Activated CD8-positive, alpha-beta T cell treated with anti-CD3 and anti-CD28 coated beads for 36 hours (primary cell): ENCODE measurements at regions of chr10 and their contacts with region 1.

Region 1: DNA sequence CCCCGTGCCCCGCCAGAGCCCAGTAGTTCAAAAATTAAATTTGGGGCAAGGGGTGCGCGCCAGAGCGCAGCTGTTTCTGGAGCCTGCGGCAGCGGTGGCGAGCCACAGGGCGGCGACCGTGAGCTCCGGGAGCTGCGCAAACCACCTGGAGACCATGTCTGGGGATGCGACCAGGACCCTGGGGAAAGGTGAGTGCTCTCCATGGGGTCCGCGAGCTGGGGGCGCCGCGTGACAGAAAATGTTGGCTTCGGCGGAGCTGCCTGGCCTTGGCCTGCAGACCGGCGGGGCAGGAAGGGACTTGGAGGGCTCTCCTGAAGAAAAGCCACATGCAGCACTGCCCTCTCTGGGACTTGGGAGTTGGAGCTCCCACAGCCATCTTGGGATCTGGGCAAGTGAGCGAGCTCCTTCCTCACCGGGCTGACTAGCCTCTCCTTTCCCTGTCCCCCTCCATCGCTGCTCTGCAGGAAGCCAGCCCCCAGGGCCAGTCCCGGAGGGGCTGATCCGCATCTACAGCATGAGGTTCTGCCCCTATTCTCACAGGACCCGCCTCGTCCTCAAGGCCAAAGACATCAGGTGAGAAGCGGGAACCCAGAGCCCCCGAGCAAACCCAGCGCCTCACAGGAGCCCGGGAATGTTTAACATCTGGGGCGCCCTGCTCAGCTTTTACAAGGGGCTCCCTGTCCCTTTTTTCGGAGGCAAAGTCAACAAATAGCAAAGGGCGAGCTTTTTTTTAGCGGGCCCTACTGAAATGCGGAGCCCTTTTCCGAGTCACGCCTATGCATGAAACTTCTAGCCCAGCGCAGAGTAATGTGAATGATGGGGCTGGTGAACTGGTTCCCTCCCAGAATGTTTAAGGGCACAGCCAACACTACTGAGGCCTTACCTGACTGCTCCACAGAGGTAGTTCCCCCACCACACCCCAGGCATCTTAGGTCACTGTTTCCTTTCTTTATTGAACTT is 6.1 kb downstream of the GSTO2 start:
- DNase-seq: peak; percentile 59
- ATAC-seq: peak; percentile 93
- H3K4me3 Mint-ChIP-seq: peak overlapping the region; percentile 62
- H3K27ac Mint-ChIP-seq: no peak overlapping the region
- H3K4me1 Mint-ChIP-seq: peaks cover 8% of the 10 kb centered on the region
- H3K27me3 Mint-ChIP-seq: peaks cover 19% of the 10 kb centered on the region
- CTCF ChIP-seq: peak; percentile 90

Region 2: GRCh38 chr10:103739039-103739764 is 535.8 kb before region 1 on chr10:
- CTCF ChIA-PET with region 1: no interaction called
- POLR2A ChIA-PET with region 1: no interaction called
- intact Hi-C with region 1: no loop called
- DNase-seq: no peak
- ATAC-seq: no peak
- H3K4me3 Mint-ChIP-seq: no peak overlapping the region
- H3K27ac Mint-ChIP-seq: no peak overlapping the region
- H3K4me1 Mint-ChIP-seq: no peaks in the 10 kb centered on the region
- H3K27me3 Mint-ChIP-seq: no peaks in the 10 kb centered on the region
- CTCF ChIP-seq: no peak

Region 3: GRCh38 chr10:104028146-104028545 is 246.9 kb before region 1 on chr10:
- CTCF ChIA-PET with region 1: no interaction called
- POLR2A ChIA-PET with region 1: no interaction called
- intact Hi-C with region 1: no loop called
- DNase-seq: peak; percentile 11
- ATAC-seq: peak; percentile 77
- H3K4me3 Mint-ChIP-seq: no peak overlapping the region
- H3K27ac Mint-ChIP-seq: no peak overlapping the region
- H3K4me1 Mint-ChIP-seq: peaks cover 10% of the 10 kb centered on the region
- H3K27me3 Mint-ChIP-seq: no peaks in the 10 kb centered on the region
- CTCF ChIP-seq: no peak

Region 4: GRCh38 chr10:104246976-104247375 is 28.1 kb before region 1 on chr10:
- CTCF ChIA-PET with region 1: interaction called, 14 read pairs
- POLR2A ChIA-PET with region 1: interaction called, 74 read pairs
- intact Hi-C with region 1: no loop called
- DNase-seq: peak; percentile 22
- ATAC-seq: peak; percentile 82
- H3K4me3 Mint-ChIP-seq: no peak overlapping the region
- H3K27ac Mint-ChIP-seq: peak overlapping the region; percentile 55
- H3K4me1 Mint-ChIP-seq: peaks cover 14% of the 10 kb centered on the region
- H3K27me3 Mint-ChIP-seq: peaks cover 9% of the 10 kb centered on the region
- CTCF ChIP-seq: no peak

Region 5: DNA sequence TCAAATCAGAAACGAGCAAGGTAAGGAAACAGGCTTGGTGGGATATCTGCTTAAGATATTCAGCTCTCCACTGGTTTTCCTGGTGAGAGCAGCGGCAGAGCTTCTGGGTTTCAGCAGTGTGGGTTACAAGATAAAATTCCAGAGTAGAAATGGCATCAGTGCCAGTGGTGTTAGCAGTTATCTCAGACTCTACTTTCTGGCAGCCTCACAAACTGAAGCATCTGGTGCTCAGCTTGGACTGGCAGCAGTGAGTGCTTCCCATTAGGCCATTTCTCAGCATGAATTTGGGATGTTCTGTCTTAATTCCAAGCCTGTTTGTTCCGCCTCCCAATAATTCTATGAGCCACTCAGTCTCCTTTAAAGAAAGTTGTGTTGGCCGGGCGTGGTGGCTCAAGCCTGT is 13.0 kb before region 1 on chr10:
- CTCF ChIA-PET with region 1: interaction called, 19 read pairs
- POLR2A ChIA-PET with region 1: interaction called, 74 read pairs
- intact Hi-C with region 1: no loop called
- DNase-seq: no peak
- ATAC-seq: no peak
- H3K4me3 Mint-ChIP-seq: no peak overlapping the region
- H3K27ac Mint-ChIP-seq: peak overlapping the region; percentile 94
- H3K4me1 Mint-ChIP-seq: peaks cover 82% of the 10 kb centered on the region
- H3K27me3 Mint-ChIP-seq: no peaks in the 10 kb centered on the region
- CTCF ChIP-seq: no peak

Region 6: GRCh38 chr10:104300736-104301292 is 25.8 kb after region 1 on chr10:
- CTCF ChIA-PET with region 1: interaction called, 239 read pairs
- POLR2A ChIA-PET with region 1: interaction called, 4 read pairs
- intact Hi-C with region 1: no loop called
- DNase-seq: peak; percentile 48
- ATAC-seq: peak; percentile 50
- H3K4me3 Mint-ChIP-seq: no peak overlapping the region
- H3K27ac Mint-ChIP-seq: peak overlapping the region; percentile 56
- H3K4me1 Mint-ChIP-seq: peaks cover 37% of the 10 kb centered on the region
- H3K27me3 Mint-ChIP-seq: peaks cover under 1% of the 10 kb centered on the region
- CTCF ChIP-seq: no peak

Region 7: GRCh38 chr10:104328896-104329710 is 54.1 kb after region 1 on chr10:
- CTCF ChIA-PET with region 1: interaction called, 11 read pairs
- POLR2A ChIA-PET with region 1: interaction called, 3 read pairs
- intact Hi-C with region 1: no loop called
- DNase-seq: peak; percentile 94
- ATAC-seq: peak; percentile 86
- H3K4me3 Mint-ChIP-seq: peak overlapping the region; percentile 73
- H3K27ac Mint-ChIP-seq: peak overlapping the region; percentile 98
- H3K4me1 Mint-ChIP-seq: peaks cover 96% of the 10 kb centered on the region
- H3K27me3 Mint-ChIP-seq: no peaks in the 10 kb centered on the region
- CTCF ChIP-seq: no peak

Region 8: GRCh38 chr10:104353325-104354048 is 78.4 kb after region 1 on chr10 and contains the start of gene CFAP58:
- CTCF ChIA-PET with region 1: interaction called, 149 read pairs
- POLR2A ChIA-PET with region 1: interaction called, 3 read pairs
- intact Hi-C with region 1: no loop called
- DNase-seq: peak; percentile 92
- ATAC-seq: peak; percentile 82
- H3K4me3 Mint-ChIP-seq: peak within 1 kb of the TSS; percentile 16
- H3K27ac Mint-ChIP-seq: peak within 1 kb of the TSS; percentile 47
- H3K4me1 Mint-ChIP-seq: peaks cover 11% of the 10 kb centered on the region
- H3K27me3 Mint-ChIP-seq: peaks cover 2% of the 10 kb centered on the region
- CTCF ChIP-seq: peak; percentile 78
- total RNA-seq, gene CFAP58: 0.27 to 0.38 TPM